HCT116 (cell line): ENCODE measurements at regions of chr11 and their contacts with region 1.

Region 1: DNA sequence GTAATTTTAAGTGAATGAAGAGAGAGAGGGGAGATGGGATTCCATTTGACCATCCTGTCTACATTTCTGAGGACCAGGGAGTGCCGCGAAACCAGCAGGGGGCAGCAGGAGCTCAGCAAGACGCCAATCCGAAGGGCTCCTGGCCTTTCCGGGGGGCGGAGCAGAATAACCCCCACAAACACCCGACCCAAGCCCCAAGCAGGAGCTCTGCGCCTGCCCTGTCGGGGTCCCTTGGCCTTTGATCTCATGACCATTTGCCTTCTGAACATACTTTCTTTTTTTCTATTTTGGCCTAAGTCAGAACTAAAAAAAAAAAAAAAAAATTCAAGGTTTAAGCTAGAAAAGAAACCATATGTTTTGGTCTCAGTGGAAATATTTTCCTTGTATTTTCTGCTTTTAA is 21.9 kb upstream of the SCN2B start:
- DNase-seq: peak; percentile 48
- ATAC-seq: peak; percentile 97
- H3K4me3 ChIP-seq: no peak overlapping the region
- H3K27ac ChIP-seq: no peak overlapping the region
- H3K4me1 ChIP-seq: peaks cover 0 to 17% of the 10 kb centered on the region in 2 experiments; a peak in 3 of 4 replicates
- H3K27me3 ChIP-seq: no peaks in the 10 kb centered on the region
- CTCF ChIP-seq: peak; percentile 88 to 94 (median 92)
- POLR2A ChIP-seq: no peak
- RAD21 ChIP-seq: peak; percentile 99

Region 2: DNA sequence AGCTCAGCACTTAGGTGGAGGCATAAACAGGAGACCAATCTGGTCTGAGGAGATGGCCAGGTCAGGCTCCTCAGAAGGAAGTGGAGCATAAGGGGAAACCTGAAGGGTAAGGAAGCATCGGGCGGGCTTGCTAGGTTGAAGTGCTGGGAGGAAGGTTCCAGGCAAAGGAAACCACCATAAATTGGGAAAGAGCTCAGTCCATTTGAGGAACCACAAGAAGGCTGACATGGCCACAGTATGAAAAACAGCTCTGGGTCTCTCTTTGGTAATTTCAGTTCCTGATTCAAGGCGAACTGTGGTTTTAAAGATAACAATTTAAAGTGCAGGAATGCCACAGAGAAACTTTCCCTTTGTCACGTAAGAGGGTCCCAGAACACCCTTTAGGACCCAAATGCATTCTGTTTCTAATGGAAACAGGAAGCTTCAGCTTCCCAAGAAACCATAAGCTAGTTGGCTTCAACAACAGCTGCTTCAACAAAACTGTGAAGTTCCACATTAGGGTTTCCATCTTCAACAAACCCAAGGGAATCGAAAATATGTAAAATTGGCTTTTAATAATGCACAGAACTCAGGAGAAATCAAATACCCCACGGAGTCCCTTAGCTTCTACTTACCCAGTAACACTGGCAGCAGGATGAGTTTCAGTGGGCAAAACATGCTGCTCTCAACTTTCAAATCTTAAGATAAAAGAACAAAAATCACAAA is 16.0 kb after region 1 on chr11:
- CTCF ChIA-PET with region 1: interaction called, 10 read pairs
- POLR2A ChIA-PET with region 1: no interaction called
- RAD21 ChIA-PET with region 1: no interaction called
- intact Hi-C with region 1: no loop called
- DNase-seq: no peak
- ATAC-seq: no peak
- H3K4me3 ChIP-seq: no peak overlapping the region
- H3K27ac ChIP-seq: no peak overlapping the region
- H3K4me1 ChIP-seq: no peaks in the 10 kb centered on the region
- H3K27me3 ChIP-seq: peaks cover 16% of the 10 kb centered on the region; the same call in 1 of the 2 replicates
- CTCF ChIP-seq: no peak
- POLR2A ChIP-seq: no peak
- RAD21 ChIP-seq: no peak

Region 3: GRCh38 chr11:118229274-118229847 is 31.0 kb after region 1 on chr11:
- CTCF ChIA-PET with region 1: no interaction called
- POLR2A ChIA-PET with region 1: no interaction called
- RAD21 ChIA-PET with region 1: no interaction called
- intact Hi-C with region 1: no loop called
- DNase-seq: no peak
- ATAC-seq: no peak
- H3K4me3 ChIP-seq: no peak overlapping the region
- H3K27ac ChIP-seq: no peak overlapping the region
- H3K4me1 ChIP-seq: peaks cover 21 to 22% of the 10 kb centered on the region in 2 experiments
- H3K27me3 ChIP-seq: no peaks in the 10 kb centered on the region
- CTCF ChIP-seq: no peak
- POLR2A ChIP-seq: no peak
- RAD21 ChIP-seq: no peak

Region 4: DNA sequence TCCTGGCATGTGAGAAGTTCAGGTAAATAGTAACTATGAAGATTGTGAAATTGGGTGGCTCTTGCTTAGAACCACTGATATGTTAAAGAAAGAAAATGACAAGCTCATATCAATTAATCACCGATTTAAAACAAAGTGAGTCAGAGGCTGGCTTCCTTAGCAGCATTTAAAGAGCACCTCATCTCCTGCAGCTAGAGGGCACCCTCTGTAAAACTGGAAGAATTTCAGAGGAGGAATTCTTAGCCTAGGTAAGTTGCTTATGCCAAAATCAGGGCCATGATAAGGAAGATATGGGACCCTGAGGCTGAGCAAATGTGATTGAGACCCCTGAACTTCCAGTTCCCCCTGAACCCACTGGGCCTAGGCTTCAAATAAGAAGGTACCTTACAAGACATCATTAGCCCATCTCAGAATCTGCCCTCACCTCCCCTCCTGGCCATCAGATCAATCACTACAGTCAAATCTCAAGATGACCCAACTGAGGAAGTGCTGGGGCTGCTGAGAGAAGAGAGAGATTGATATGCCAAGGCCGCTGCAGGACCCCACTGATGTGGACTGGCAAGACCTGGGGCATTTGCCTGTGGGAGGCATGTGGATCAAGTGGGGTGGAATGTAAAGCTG is 97.6 kb after region 1 on chr11:
- CTCF ChIA-PET with region 1: interaction called, 61 read pairs
- POLR2A ChIA-PET with region 1: no interaction called
- RAD21 ChIA-PET with region 1: interaction called, 10 read pairs
- intact Hi-C with region 1: loop called (anchors 1 kb)
- DNase-seq: peak; percentile 43
- ATAC-seq: peak; percentile 78
- H3K4me3 ChIP-seq: no peak overlapping the region
- H3K27ac ChIP-seq: no peak overlapping the region
- H3K4me1 ChIP-seq: peaks cover 0 to 10% of the 10 kb centered on the region in 2 experiments; a peak in 2 of 4 replicates
- H3K27me3 ChIP-seq: no peaks in the 10 kb centered on the region
- CTCF ChIP-seq: peak; percentile 72 to 79 (median 73)
- POLR2A ChIP-seq: no peak
- RAD21 ChIP-seq: peak; percentile 70

Region 5: DNA sequence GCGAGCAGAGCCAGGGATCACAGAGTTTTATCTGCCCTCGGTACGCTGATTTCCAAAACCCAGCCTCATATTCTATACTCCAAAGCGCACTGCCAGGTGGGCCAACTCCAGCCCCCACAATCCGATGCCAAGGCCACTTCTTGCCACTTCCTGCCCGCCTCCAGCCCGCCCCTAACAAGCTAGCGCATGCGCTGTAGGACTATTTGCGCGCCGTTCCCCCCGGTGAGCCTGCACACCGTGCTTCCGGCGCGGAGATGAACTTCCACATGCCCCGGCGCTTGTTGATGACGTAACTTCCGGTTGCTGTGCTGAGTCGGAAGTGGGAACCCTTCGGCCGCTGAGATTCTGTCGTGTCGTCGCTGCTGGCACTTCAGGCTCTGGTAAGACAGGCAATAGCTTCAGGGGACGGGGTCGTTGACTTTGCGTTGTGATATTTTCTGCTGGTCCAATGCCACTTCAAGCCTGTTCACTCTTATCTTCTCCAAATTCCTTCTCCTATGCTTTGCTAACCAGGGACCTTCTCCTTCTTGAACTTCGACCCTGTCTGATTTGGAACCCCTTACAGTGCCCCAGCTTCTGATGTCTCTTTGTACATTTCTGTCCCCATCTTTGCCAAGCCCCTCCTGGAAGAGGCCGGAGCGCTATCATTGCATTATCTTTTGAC is 161.1 kb after region 1 on chr11 and contains the start of gene UBE4A:
- CTCF ChIA-PET with region 1: interaction called, 11 read pairs
- POLR2A ChIA-PET with region 1: no interaction called
- RAD21 ChIA-PET with region 1: no interaction called
- intact Hi-C with region 1: no loop called
- DNase-seq: peak; percentile 97
- ATAC-seq: peak; percentile 96
- H3K4me3 ChIP-seq: peak within 1 kb of the TSS; percentile 83 to 97
- H3K27ac ChIP-seq: peak within 1 kb of the TSS; percentile 33
- H3K4me1 ChIP-seq: peaks cover 8 to 10% of the 10 kb centered on the region in 2 experiments
- H3K27me3 ChIP-seq: no peaks in the 10 kb centered on the region
- CTCF ChIP-seq: no peak
- POLR2A ChIP-seq: peak; percentile 88
- RAD21 ChIP-seq: no peak
- total RNA-seq, gene UBE4A: 49.9 TPM